ENCODE measurements at regions of chr11 and their contacts with region 1.

Region 1: GRCh38 chr11:129364143-129364654 is 11.4 kb upstream of the BARX2 start:
- DNase-seq: peak; percentile 29
- H3K4me3 ChIP-seq: no peak overlapping the region
- CTCF ChIP-seq: peak; percentile 100

Region 2: DNA sequence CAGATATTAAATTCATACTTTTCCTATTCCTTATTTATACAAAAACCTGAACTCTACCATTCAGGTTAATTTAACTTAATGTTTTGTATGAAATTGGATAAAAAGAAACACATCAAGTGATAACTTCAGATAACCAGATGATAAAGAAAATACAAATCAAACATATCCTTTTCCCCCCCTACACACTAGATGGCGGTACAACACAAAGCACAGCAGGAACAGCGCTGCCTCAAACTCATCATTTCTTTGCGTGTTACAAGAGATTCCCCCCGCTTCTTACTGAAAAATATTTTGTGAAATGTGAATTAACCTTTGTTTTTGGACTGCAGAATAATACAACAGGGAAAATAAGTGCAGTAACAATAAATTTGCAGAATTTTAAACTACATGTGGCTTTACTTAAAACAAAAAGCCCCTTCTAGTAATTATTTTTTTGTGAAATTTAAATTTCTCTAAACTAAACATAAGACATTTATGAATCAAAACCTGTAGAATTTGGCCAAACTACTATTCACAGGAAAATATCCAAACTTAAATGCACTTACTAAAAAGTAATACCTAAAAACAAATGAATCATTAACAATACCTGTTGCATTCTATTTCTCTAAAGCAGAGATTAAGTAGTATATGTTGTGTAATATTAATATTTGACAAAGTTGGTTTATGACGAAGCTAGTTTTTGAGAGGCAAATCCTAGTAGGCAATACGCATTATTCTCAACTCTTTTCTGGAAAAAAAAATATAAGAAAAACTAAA is 246.4 kb before region 1 on chr11:
- CTCF ChIA-PET with region 1: interaction called, 15 read pairs
- POLR2A ChIA-PET with region 1: no interaction called
- DNase-seq: peak; percentile 26
- H3K4me3 ChIP-seq: no peak overlapping the region
- CTCF ChIP-seq: peak; percentile 66

Region 3: GRCh38 chr11:129375751-129376657 is 11.8 kb after region 1 on chr11 and contains the start of gene BARX2:
- CTCF ChIA-PET with region 1: interaction called, 41 read pairs
- POLR2A ChIA-PET with region 1: no interaction called
- DNase-seq: no peak
- H3K4me3 ChIP-seq: no peak within 1 kb of the TSS
- CTCF ChIP-seq: peak; percentile 59

Region 4: DNA sequence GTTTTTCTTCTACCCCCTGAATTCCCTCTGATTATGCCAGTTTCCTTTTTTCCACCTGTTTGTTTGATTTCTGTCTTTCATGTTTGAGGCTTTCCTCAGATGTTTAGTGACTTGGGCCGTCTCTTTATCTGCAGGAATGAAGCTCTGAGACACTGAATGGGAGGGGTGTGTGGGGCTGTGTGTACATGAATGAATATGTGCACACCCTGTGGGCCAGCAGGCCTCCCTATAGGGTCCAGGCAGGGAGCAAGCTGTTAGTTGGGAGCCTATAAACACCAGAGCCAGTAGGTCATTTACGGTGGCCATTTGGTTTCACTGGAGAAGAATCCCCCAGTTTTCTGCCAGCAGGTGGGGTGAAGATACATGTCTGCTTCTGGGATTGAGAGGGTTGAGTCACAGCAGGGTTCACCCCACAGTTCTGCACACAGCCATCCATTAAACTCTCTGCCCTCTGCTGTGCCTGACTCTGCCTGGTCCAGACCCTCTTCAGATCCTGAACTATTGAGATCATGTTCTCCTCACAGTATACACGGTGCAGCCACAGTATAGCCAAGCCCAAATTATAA is 46.3 kb after region 1 on chr11:
- CTCF ChIA-PET with region 1: no interaction called
- POLR2A ChIA-PET with region 1: no interaction called
- DNase-seq: no peak
- H3K4me3 ChIP-seq: no peak overlapping the region
- CTCF ChIP-seq: no peak

Region 5: DNA sequence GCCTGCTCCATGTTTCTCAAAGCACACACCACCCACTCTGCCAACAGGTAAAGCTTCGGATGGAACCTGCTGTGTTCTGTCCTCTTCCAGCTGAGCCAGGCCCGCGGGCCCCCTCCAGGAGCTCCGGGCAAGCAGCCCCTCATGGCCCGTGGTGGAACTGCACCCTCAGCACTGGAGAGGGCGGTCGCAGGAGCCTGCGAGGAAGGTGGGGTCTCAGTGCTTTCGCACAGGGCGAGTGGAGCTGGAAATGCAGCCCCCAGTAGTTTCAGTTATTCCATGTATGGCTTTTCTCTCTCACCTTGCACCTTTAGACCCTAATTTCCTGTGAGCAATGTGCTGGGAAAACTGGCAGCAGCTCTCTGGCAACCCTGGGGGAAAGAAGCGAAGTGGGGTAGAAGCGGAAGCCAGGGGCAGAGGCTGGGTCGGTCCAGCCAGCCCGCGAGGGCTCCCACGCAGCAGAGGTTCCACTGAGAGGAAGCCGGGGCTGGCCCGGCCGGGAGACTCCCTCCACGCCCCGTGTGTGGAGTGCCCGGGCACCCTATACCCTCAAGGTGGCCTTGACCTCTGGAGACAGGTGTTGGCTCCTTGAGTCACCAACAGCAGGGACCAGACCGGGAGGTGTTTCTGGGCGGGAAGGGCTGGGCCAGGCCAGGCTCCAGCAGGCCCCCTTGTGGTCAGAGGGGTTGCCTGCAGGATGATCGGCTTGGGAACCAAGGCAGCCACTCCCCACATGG is 331.5 kb after region 1 on chr11:
- CTCF ChIA-PET with region 1: interaction called, 13 read pairs
- POLR2A ChIA-PET with region 1: no interaction called
- DNase-seq: no peak
- H3K4me3 ChIP-seq: peak overlapping the region; percentile 2
- CTCF ChIP-seq: peak; percentile 78

Region 6: DNA sequence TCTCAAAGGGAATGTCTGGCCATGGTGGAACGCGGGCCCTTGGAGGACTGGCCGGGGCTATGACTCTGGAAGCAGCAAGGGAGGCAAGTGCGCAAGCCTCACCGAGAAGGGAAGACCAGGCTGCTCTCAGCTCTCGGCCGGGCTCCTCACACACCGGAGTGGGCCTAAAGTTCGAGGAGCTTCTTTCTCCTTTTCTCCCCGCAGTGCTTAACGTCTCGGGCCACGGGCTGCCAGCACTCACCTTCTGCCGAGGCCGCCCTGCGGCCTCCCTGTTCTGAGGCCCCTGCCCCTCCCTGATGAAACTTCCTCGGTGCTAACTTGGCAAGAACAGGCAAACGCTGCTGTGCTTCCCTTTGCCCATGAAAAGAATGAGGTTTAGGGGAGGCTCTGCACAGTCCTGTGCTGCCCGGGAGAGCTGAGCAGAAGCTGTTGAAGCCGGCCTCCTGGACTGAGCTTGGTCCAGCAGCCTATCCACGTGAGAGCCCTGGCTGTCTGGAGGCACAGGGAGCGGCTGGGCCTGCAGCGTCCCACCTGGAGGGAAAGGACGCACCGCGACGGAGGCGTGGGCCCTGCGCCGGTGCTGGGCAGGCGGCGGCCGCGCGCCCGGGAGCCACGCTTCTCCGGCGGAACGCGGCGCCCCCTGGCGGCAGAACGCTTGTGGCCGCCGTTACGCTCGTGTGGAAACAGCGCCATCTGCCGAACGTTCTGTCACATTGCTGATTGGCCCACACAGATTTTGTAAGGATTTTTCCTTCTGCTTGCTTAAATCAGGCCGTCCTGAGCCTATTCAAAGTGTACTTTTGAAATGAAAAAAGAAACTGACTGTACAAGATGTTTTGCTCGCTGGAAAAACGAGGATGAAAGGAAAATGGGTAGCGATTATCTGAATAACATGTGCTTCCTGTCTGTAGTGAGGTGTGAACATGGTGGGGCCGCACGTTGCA is 386.4 kb after region 1 on chr11:
- CTCF ChIA-PET with region 1: interaction called, 98 read pairs
- POLR2A ChIA-PET with region 1: no interaction called
- DNase-seq: no peak
- H3K4me3 ChIP-seq: peak overlapping the region; percentile 42
- CTCF ChIP-seq: peak; percentile 88

Measured in AG04449 (cell line).